Pancreas (tissue), 10 donors: ENCODE measurements at regions of chr4 and their contacts with region 1.

Region 1: GRCh38 chr4:106495476-106495875 is 126.9 kb upstream of the GIMD1 start:
- DNase-seq: no peak
- ATAC-seq: no peak
- H3K4me3 ChIP-seq: no peak overlapping the region
- H3K27ac ChIP-seq: no peak overlapping the region
- H3K4me1 ChIP-seq: no peaks in the 10 kb centered on the region
- H3K27me3 ChIP-seq: no peaks in the 10 kb centered on the region
- CTCF ChIP-seq: no peak

Region 2: GRCh38 chr4:106369456-106370060 is 125.9 kb before region 1 on chr4:
- intact Hi-C with region 1: loop called in 1 of 3 experiments (anchors 10 kb)
- DNase-seq: no peak
- ATAC-seq: peak in 3 of 4 donors; percentile 54 to 70 (median 63)
- H3K4me3 ChIP-seq: no peak overlapping the region
- H3K27ac ChIP-seq: no peak overlapping the region
- H3K4me1 ChIP-seq: no peaks in the 10 kb centered on the region
- H3K27me3 ChIP-seq: no peaks in the 10 kb centered on the region
- CTCF ChIP-seq: peak in 3 of 4 donors; percentile 6 to 38 (median 31)